GM10248 (cell line): ENCODE measurements at regions of chr14 and their contacts with region 1.

Region 1: DNA sequence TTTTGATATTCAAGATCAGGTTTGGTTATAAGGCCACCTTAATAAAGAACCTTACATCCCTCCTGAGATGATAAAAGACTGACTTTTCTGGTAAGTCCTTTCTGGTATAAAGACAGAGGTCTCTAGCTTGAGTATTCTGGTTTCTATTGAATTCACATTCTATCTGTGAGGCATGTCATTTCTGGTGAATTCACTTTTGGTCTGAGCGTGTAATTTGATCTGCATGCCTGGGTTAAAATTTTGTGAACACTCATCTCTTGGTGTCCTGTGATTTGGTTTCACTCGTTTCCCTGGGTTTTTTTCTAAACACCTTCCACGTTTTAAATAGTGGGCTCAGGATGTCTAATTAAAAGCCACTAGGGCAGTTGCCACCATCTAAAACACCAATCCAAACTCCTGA is 12.2 kb downstream of the EIF5 start:
- DNase-seq: no peak
- CTCF ChIP-seq: no peak

Region 2: GRCh38 chr14:103333754-103334643 is 12.3 kb before region 1 on chr14 and contains the start of gene EIF5:
- CTCF ChIA-PET with region 1: interaction called, 5 read pairs
- POLR2A ChIA-PET with region 1: interaction called, 14 read pairs
- DNase-seq: peak; percentile 97
- CTCF ChIP-seq: no peak